ENCODE measurements at regions of chr4 and their contacts with region 1.

Region 1: DNA sequence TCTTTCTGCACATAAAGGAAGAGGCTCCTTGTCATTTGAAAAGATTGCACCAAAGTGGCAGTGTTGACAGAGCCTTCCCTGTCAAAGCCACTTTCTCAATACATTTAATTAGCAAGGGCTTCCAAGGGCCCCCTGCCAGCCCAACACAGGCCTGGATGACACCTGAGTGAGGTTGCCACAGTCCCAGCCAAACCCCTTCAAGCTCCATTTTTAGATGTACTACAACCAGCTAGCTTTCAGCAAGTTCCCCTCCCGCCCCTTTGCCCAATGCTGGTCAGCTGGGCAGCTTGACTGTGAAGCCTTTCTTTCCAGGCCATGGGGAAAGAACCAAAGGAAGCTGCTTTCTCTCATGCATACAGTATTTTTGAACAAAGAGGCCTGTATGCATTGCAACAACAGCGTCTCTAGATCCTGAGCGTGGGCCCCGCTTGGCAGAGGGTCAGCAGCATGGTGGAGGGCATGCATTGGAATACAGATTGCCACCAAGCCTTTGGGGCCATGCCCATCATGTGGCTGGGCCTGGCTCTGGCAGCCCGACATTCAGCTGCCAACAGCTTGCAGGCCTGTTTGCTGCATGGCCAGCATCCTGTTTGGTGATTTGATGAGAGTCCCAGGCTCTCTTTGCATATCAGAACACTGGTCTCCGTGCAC is 261.1 kb upstream of the GATB start:
- DNase-seq: peak; percentile 85 to 99 (median 92)

Region 2: GRCh38 chr4:152348670-152349069 is 326.8 kb after region 1 on chr4:
- intact Hi-C with region 1: loop called (anchors 10 kb)
- DNase-seq: no peak

Measured in posterior cingulate gyrus (tissue), 11 donors.